Activated CD4-positive, alpha-beta T cell treated with anti-CD3 and anti-CD28 coated beads, Interleukin-2, amount 10 ng/mL, durations not matched to agents 24 days and 14 days (primary cell): ENCODE measurements at regions of chr14 and their contacts with region 1.

Region 1: DNA sequence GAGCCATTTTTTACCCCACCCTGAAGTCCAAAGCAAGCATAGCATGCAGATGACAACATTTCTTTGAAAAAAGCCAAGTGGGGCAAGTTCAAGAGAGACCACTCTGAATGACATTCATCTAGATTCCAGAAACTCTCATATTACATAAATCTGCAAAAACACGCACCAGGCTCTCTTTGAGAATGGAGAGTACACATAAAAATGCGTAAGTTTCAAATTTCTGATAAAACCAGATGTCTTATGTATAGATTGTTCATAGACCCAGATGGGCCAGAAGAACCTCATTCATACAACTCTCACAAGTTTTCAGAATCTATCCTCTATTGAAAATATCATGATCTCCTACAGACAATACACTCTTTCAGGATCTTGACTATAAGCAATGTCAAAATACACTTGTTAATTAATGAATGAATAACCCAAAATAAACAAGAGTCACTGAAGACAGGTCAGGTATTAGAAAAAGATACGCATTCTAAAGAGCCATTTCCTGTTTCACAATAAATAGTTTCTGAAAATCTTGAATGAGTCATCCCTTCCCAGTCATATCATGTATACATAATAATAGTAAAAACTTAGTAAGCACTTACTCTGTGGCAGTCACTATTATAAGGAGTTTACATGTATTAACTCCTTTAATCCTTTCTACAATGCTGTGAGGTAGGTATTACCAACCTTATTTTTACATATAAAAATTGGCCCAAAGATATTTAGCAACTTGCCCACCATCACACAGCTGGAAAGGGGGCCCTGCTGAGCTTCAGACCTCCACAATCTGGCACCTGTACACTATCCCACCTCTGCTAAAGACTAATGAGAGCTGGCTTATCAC is 72.0 kb downstream of the PPP2R5E start:
- DNase-seq: no peak
- H3K4me3 Mint-ChIP-seq: peak overlapping the region; percentile 43
- H3K27ac Mint-ChIP-seq: peak overlapping the region; percentile 34
- H3K4me1 Mint-ChIP-seq: peaks cover 39% of the 10 kb centered on the region
- H3K27me3 Mint-ChIP-seq: no peaks in the 10 kb centered on the region

Region 2: DNA sequence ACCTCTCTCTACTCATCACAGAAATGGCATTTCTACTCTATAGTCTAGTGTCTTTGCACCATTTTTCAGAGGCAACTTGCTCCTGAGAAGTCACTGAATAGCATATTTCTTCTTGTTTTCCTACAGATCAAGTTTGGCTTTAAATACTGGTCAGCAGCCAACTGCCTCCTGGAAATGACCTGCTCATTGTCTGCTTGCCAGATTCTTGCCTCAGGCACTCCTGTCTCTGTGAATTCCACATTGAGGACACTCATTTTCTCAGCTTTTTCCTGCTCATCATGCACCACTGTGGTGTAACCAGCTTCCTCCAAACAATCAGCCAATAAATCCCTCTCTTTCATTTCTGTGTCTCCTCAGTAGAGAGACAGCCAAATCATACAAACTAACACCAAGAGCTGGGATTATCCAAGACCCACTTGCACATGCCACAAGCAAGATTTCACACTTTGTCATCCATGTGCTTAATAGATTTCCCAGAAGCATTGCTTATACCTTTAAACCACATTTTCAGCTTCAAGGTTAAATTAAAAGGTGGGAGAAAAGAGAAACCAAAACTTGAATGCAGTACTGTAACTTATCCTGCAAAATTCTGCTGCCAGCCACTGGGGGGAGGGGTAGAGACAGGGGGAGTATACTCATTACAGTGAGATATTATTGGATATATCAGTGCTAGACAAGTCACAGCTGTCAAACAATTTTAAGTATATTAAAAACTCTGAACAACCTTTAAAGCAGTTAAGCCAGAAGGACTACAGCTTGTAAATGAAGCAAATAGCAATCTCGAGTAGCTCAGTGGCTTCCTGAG is 33.0 kb before region 1 on chr14:
- intact Hi-C with region 1: loop called (anchors 2 kb)
- DNase-seq: peak; percentile 80
- H3K4me3 Mint-ChIP-seq: peak overlapping the region; percentile 75
- H3K27ac Mint-ChIP-seq: peak overlapping the region; percentile 45
- H3K4me1 Mint-ChIP-seq: peaks cover 46% of the 10 kb centered on the region
- H3K27me3 Mint-ChIP-seq: no peaks in the 10 kb centered on the region

Region 3: GRCh38 chr14:63727774-63728728 is 256.9 kb after region 1 on chr14 and contains the start of gene SGPP1:
- intact Hi-C with region 1: loop called (anchors 10 kb)
- DNase-seq: peak; percentile 94
- H3K4me3 Mint-ChIP-seq: peak within 1 kb of the TSS; percentile 100
- H3K27ac Mint-ChIP-seq: peak within 1 kb of the TSS; percentile 98
- H3K4me1 Mint-ChIP-seq: peaks cover 31% of the 10 kb centered on the region
- H3K27me3 Mint-ChIP-seq: peaks cover 19% of the 10 kb centered on the region
- total RNA-seq, gene SGPP1: 12.2 and 13.3 TPM in 2 replicates

Region 4: GRCh38 chr14:63760014-63760413 is 288.8 kb after region 1 on chr14:
- intact Hi-C with region 1: loop called (anchors 10 kb)
- DNase-seq: no peak
- H3K4me3 Mint-ChIP-seq: peak overlapping the region; percentile 81
- H3K27ac Mint-ChIP-seq: peak overlapping the region; percentile 93
- H3K4me1 Mint-ChIP-seq: peaks cover 11% of the 10 kb centered on the region
- H3K27me3 Mint-ChIP-seq: no peaks in the 10 kb centered on the region